ENCODE measurements at regions of chr6 and their contacts with region 1.

Region 1: DNA sequence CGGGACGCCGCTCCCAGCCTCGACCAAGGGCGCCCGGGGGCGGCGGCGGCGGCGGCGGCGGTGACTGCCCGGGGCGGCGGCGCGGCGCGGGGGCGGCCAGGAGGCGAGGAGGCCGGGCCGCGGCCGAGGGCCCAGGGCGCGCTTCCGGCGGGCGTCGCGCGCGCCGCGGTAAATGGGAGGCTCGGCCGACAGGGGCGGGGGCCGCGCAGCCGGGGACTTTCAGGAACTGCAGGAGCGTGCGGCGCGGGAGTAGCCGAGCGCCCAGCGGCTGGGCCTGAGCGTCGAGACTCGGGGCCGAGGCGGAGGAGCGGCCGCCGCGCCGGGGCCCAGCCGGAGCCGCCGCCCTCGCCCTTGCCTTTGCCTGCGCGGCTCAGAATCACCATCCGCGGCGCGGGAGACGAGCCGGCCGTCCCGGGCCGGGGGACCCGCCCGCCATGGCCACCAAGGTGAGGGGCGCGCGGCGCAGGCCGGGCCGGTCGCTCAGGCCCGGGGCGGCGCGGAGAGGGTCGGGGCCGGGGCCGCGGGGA is at the start of gene SNX9:
- DNase-seq: peak in 1 of 2 experiments; percentile 56
- H3K4me3 ChIP-seq: peak within 1 kb of the TSS; percentile 82
- H3K27ac ChIP-seq: peak within 1 kb of the TSS; percentile 70
- H3K4me1 ChIP-seq: peaks cover 17% of the 10 kb centered on the region
- H3K27me3 ChIP-seq: no peaks in the 10 kb centered on the region
- CTCF ChIP-seq: no peak
- total RNA-seq, gene SNX9: 22.5 and 25.0 TPM in 2 replicates

Region 2: DNA sequence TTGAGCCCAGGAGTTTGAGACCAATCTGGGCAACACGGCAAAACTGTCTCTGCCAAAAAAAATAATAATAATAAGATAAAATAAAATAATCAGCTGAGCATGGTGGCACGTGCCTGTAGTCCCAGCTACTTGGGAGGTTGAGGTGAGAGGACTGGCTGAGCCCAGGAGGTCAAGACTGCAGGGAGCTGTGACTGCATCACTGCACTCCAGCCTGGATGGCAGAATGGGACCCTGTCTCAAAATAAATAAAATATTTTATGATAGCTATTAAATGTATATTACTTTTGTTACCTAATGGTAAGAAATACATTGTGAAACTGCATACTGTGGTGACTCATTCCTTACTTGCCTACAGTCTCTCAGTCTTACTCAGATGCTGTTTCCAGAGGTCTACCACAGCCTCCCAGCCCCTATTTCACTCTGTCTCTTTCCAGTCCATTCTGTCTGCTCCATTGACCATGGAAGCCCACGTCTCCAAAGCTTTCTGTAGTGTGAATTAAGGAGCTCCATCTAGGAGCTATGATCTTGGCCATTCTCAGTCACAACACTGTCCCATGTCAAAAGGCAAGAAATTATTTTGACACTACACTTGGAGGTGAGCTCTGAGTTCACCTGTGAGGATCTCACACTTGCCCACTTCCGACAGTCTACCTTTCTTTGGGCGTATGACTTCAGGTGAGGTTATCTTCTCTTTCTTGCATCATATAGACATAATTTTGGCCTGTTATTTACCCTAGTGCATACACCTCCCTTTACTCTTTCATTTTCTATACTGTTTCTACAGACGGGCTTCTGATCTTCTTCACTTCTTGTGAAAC is 22.4 kb before region 1 on chr6:
- CTCF ChIA-PET with region 1: no interaction called
- POLR2A ChIA-PET with region 1: no interaction called
- intact Hi-C with region 1: no loop called
- DNase-seq: no peak
- H3K4me3 ChIP-seq: no peak overlapping the region
- H3K27ac ChIP-seq: no peak overlapping the region
- H3K4me1 ChIP-seq: peaks cover 10% of the 10 kb centered on the region
- H3K27me3 ChIP-seq: no peaks in the 10 kb centered on the region
- CTCF ChIP-seq: no peak

Region 3: DNA sequence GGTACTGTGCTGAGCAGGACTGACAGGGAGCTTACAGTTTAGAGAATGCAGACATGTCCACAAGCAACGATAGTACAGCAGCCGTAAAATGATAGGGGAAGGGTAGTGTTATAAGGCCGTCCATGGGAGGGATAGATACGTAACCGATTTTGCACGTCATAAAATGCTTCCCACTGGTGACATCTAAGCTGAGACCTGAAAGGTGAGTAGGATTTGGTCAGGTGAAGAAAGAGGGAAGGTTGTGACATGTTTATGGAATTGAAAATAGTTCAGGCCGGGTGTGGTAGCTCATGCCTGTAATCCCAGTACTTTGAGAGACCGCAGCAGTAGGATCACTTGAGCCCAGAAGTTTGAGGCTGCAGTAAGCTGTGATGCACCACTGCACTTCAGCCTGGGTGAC is 25.6 kb after region 1 on chr6:
- CTCF ChIA-PET with region 1: no interaction called
- POLR2A ChIA-PET with region 1: interaction called, 12 read pairs
- intact Hi-C with region 1: no loop called
- DNase-seq: no peak
- H3K4me3 ChIP-seq: no peak overlapping the region
- H3K27ac ChIP-seq: no peak overlapping the region
- H3K4me1 ChIP-seq: no peaks in the 10 kb centered on the region
- H3K27me3 ChIP-seq: no peaks in the 10 kb centered on the region
- CTCF ChIP-seq: no peak